ENCODE measurements at regions of chr15 and their contacts with region 1.

Region 1: GRCh38 chr15:99282121-99282520 is 30.8 kb downstream of the LRRC28 start:
- DNase-seq: no peak
- H3K4me3 Mint-ChIP-seq: no peak overlapping the region
- H3K27ac Mint-ChIP-seq: no peak overlapping the region
- H3K4me1 Mint-ChIP-seq: peaks cover 40% of the 10 kb centered on the region
- H3K27me3 Mint-ChIP-seq: no peaks in the 10 kb centered on the region

Region 2: GRCh38 chr15:99371180-99372103 is 89.3 kb after region 1 on chr15:
- CTCF ChIA-PET with region 1: interaction called, 3 read pairs
- POLR2A ChIA-PET with region 1: no interaction called
- intact Hi-C with region 1: loop called (anchors 1 kb)
- DNase-seq: no peak
- H3K4me3 Mint-ChIP-seq: no peak overlapping the region
- H3K27ac Mint-ChIP-seq: peak overlapping the region; percentile 55
- H3K4me1 Mint-ChIP-seq: peaks cover 12% of the 10 kb centered on the region
- H3K27me3 Mint-ChIP-seq: no peaks in the 10 kb centered on the region

Measured in activated CD4-positive, alpha-beta memory T cell treated with anti-CD3 and anti-CD28 coated beads for 36 hours (primary cell).